ENCODE measurements at regions of chr5 and their contacts with region 1.

Region 1: GRCh38 chr5:36998578-36998977 is 122.0 kb downstream of the NIPBL start:
- DNase-seq: no peak
- H3K4me3 ChIP-seq: no peak overlapping the region
- H3K27ac ChIP-seq: no peak overlapping the region
- H3K4me1 ChIP-seq: no peaks in the 10 kb centered on the region
- H3K27me3 ChIP-seq: no peaks in the 10 kb centered on the region
- CTCF ChIP-seq: no peak
- POLR2A ChIP-seq: no peak

Region 2: GRCh38 chr5:36887532-36887931 is 111.0 kb before region 1 on chr5:
- CTCF ChIA-PET with region 1: no interaction called
- POLR2A ChIA-PET with region 1: no interaction called
- dilution Hi-C with region 1: no loop called
- intact Hi-C with region 1: loop called (anchors 1 kb)
- DNase-seq: no peak
- H3K4me3 ChIP-seq: no peak overlapping the region
- H3K27ac ChIP-seq: no peak overlapping the region
- H3K4me1 ChIP-seq: no peaks in the 10 kb centered on the region
- H3K27me3 ChIP-seq: no peaks in the 10 kb centered on the region
- CTCF ChIP-seq: no peak
- POLR2A ChIP-seq: no peak

Region 3: GRCh38 chr5:37054391-37054790 is 55.8 kb after region 1 on chr5:
- CTCF ChIA-PET with region 1: no interaction called
- POLR2A ChIA-PET with region 1: no interaction called
- dilution Hi-C with region 1: no loop called
- intact Hi-C with region 1: loop called (anchors 5 kb)
- DNase-seq: peak; percentile 41
- H3K4me3 ChIP-seq: no peak overlapping the region
- H3K27ac ChIP-seq: no peak overlapping the region
- H3K4me1 ChIP-seq: no peaks in the 10 kb centered on the region
- H3K27me3 ChIP-seq: no peaks in the 10 kb centered on the region
- CTCF ChIP-seq: no peak
- POLR2A ChIP-seq: no peak

Region 4: GRCh38 chr5:37248970-37249686 is 250.6 kb after region 1 on chr5 and contains the start of gene CPLANE1:
- CTCF ChIA-PET with region 1: no interaction called
- POLR2A ChIA-PET with region 1: no interaction called
- dilution Hi-C with region 1: no loop called
- intact Hi-C with region 1: no loop called
- DNase-seq: peak; percentile 87
- H3K4me3 ChIP-seq: peak within 1 kb of the TSS; percentile 96 to 97 (median 96)
- H3K27ac ChIP-seq: peak within 1 kb of the TSS; percentile 85
- H3K4me1 ChIP-seq: peaks cover 6% of the 10 kb centered on the region
- H3K27me3 ChIP-seq: no peaks in the 10 kb centered on the region
- CTCF ChIP-seq: no peak
- POLR2A ChIP-seq: peak; percentile 97
- total RNA-seq, gene CPLANE1: 16.9 and 21.5 TPM in 2 replicates

Measured in endothelial cell of umbilical vein (primary cell).